Right ventricle myocardium inferior (tissue), 1 donor: ENCODE measurements at regions of chr6 and their contacts with region 1.

Region 1: GRCh38 chr6:33454009-33454946 is at the start of gene ZBTB9:
- DNase-seq: peak; percentile 98
- ATAC-seq: peak; percentile 99
- total RNA-seq, gene ZBTB9: 4.1 TPM

Region 2: DNA sequence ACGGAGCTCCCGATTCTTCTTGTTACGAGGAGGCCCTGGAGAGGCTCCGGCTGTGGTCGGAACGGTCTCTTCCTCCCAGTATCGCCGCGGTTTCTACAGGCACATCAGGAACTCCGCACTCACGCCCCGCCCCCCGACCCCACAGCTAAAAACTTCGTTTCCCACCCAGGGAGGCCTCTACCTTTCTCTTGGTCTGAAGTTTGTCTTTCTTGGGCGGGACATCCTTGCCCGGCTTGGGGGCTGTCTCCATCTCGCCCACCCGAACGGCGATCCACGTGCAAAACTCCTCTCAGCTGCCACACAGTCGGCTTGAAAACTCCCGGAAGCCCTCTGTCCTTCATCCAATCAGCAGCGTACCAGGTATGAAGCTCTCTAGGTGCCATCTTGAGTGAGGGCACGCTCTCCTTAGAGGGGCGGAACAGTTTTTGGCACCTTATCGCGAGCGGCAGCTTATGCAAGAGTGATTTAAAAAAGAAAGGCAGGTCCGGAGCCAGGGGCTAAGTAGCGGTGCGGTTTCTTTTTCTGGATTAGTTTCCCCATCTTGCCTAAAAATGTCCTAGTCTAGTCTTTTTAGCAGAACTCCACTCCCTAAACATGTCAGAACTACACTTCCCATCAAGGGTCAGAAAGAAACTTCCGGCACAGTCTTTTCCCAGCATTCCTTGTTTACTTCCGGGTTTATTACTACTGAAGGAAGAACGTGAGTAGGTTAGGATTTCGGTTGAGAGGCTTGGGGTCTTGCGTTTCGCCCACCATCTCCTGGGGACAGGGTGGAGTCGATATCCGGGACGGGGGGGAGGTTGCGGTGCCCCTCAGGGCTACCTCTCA is 165.1 kb before region 1 on chr6 and contains the starts of genes PFDN6 and WDR46:
- intact Hi-C with region 1: no loop called
- DNase-seq: peak; percentile 86
- ATAC-seq: peak; percentile 95
- total RNA-seq, gene PFDN6: 57.8 TPM
- total RNA-seq, gene WDR46: 15.9 TPM

Region 3: GRCh38 chr6:33391278-33391921 is 62.9 kb before region 1 on chr6 and contains the start of gene KIFC1:
- intact Hi-C with region 1: no loop called
- DNase-seq: peak; percentile 99
- ATAC-seq: peak; percentile 99
- total RNA-seq, gene KIFC1: 1.3 TPM

Region 4: DNA sequence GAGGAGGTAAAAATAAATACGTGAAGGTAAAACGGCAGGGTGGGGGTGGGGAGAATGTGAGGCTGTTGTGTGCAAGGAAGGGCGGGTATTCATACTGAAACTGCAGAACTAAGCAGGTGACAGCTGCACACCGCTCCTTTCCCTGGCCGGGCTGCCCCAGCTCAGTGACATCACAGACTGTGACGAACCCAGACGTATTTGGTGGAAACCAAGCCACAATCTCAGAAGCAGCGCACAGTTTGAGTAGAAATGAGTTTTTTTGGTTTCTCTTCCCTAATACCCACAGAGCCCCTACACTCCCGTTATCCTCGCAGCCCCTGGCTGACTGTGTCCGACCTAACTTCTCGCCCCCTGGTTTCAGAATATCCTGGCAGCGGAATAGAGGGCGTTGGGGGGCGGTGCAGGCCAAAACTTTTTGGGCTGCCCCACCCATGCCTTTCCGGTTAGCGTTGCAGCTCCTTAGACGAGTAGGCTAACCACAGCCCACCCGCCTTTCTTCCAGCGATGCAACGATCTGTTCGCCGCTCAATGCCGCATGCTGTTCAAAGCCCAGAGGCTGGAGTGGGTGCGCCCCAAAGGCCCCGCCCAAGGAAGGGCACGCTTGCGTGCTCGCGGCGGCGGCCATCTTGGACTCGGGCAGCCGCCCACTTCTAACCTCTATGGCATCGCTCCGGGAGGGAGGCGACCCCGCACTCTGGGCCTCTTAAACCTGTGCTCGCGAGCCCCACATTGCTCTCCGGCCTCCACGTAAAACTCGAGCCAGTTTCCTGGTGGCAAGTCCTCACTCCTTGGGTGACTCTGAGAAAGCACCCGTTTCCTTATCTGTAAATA is 116.7 kb after region 1 on chr6:
- intact Hi-C with region 1: loop called (anchors 2 kb)
- DNase-seq: peak; percentile 94
- ATAC-seq: peak; percentile 93